ENCODE measurements at regions of chr9 and their contacts with region 1.

Region 1: GRCh38 chr9:95073021-95073607 is 244.4 kb downstream of the FANCC start:
- DNase-seq: peak in 1 of 2 experiments; percentile 57
- H3K4me3 ChIP-seq: no peak overlapping the region
- H3K27ac ChIP-seq: no peak overlapping the region
- H3K4me1 ChIP-seq: peaks cover 0 to 3% (median 1%) of the 10 kb centered on the region in 4 experiments; a peak in 3 of 7 replicates
- H3K27me3 ChIP-seq: no peaks in the 10 kb centered on the region
- CTCF ChIP-seq: peak; percentile 50 to 63 (median 59)
- EP300 ChIP-seq: no peak
- POLR2A ChIP-seq: no peak
- RAD21 ChIP-seq: peak; percentile 51 to 64

Region 2: GRCh38 chr9:95055851-95056551 is 17.1 kb before region 1 on chr9:
- CTCF ChIA-PET with region 1: interaction called, 14 read pairs
- POLR2A ChIA-PET with region 1: no interaction called
- DNase-seq: no peak
- H3K4me3 ChIP-seq: no peak overlapping the region
- H3K27ac ChIP-seq: no peak overlapping the region
- H3K4me1 ChIP-seq: peaks cover 3 to 7% (median 4%) of the 10 kb centered on the region in 4 experiments; a peak in 4 of 7 replicates
- H3K27me3 ChIP-seq: no peaks in the 10 kb centered on the region; a peak in 1 of 7 replicates
- CTCF ChIP-seq: no peak
- EP300 ChIP-seq: no peak
- POLR2A ChIP-seq: no peak
- RAD21 ChIP-seq: no peak

Region 3: DNA sequence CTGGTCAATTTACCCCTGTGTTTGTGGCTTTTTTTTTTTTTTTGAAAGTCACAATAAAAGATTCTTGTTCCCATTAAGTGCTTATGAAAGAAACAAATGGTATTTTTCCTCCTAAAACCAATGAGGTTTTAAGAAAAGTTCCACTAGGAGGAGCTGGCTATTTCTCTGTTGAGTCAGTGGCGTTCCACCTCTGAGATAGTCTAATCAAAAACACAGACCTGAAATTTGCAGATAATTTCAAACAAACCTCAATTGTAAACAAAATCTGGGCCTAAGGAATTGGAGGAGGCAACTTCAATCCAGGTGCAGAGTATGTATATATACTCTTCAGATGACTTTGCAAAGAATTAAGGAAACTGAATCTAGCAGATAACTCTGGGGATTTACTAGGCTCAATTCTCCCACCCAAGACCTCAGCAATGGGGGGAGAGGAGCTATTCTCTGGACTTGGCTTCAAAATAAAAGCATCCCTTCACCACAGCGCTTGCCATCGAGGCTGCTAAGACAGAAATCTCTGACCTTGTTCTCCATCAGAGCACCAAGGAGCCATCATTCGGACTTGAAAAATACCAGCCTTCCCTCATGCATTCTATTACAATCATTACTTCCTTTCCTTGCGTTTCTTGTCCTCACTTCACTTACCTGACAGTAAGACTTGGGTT is 192.0 kb after region 1 on chr9:
- CTCF ChIA-PET with region 1: no interaction called
- POLR2A ChIA-PET with region 1: no interaction called
- DNase-seq: no peak
- H3K4me3 ChIP-seq: no peak overlapping the region
- H3K27ac ChIP-seq: no peak overlapping the region
- H3K4me1 ChIP-seq: peaks cover 0 to 2% (median 0%) of the 10 kb centered on the region in 4 experiments; a peak in 3 of 7 replicates
- H3K27me3 ChIP-seq: no peaks in the 10 kb centered on the region
- CTCF ChIP-seq: peak in 2 of 3 experiments; percentile 21 to 32; a peak in 2 of 4 replicates
- EP300 ChIP-seq: no peak
- POLR2A ChIP-seq: no peak
- RAD21 ChIP-seq: peak; percentile 52 to 54

Measured in H1 (cell line).